ENCODE measurements at regions of chr4 and their contacts with region 1.

Region 1: DNA sequence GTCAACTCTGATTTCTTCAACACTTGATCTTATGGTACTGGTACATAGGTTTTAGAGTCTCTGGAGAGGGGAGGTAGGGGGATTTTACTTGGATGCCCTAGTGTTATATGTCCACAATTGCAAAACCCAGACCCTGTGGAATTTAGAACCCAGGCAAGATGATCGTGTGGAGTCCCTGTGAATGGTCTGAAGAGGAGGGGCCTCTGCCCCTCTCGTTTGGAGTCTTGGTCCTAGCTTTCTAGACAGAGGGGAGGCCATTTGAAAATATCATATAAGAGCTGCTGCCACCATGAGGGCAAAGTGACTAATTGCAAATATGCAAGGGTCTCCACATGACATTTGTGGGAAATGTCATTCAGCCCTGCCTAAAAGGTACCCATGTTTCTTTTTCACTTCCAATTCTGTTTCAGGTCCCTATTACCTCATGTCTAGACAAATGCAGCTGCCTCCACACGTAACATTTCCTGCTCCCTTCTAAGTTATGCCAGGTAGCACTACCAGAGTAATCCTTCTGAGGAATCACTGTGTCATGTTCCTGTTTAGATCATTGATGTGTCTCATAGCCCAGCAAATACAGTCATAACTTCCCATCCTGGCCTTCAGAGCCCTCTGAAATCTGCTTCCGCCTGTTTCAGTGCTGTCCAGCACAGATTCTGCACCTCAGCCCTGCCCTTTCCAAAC is 126.8 kb downstream of the KLHL8 start:
- DNase-seq: peak; percentile 43
- ATAC-seq: peak; percentile 93
- H3K4me3 ChIP-seq: no peak overlapping the region
- H3K27ac ChIP-seq: peak overlapping the region; percentile 13; the same call in 1 of the 2 replicates
- H3K4me1 ChIP-seq: peaks cover 16% of the 10 kb centered on the region
- H3K27me3 ChIP-seq: no peaks in the 10 kb centered on the region
- CTCF ChIP-seq: peak; percentile 62 to 78 (median 64)
- EP300 ChIP-seq: 0 out of 4 replicates have a peak, but pooled peaks of 1 of the 2 experiments have one; percentile 9
- POLR2A ChIP-seq: no peak
- RAD21 ChIP-seq: peak; percentile 85

Region 2: GRCh38 chr4:86908251-86908657 is 185.3 kb before region 1 on chr4:
- CTCF ChIA-PET with region 1: interaction called, 5 read pairs
- POLR2A ChIA-PET with region 1: no interaction called
- RAD21 ChIA-PET with region 1: interaction called, 5 read pairs
- SMC1A ChIA-PET with region 1: interaction called, 13 read pairs
- in situ Hi-C with region 1: no loop called
- intact Hi-C with region 1: no loop called
- DNase-seq: no peak
- ATAC-seq: peak; percentile 53
- H3K4me3 ChIP-seq: no peak overlapping the region
- H3K27ac ChIP-seq: peak overlapping the region; percentile 8; the same call in 1 of the 2 replicates
- H3K4me1 ChIP-seq: peaks cover 18% of the 10 kb centered on the region
- H3K27me3 ChIP-seq: no peaks in the 10 kb centered on the region
- CTCF ChIP-seq: no peak
- EP300 ChIP-seq: no peak
- POLR2A ChIP-seq: no peak
- RAD21 ChIP-seq: no peak

Region 3: DNA sequence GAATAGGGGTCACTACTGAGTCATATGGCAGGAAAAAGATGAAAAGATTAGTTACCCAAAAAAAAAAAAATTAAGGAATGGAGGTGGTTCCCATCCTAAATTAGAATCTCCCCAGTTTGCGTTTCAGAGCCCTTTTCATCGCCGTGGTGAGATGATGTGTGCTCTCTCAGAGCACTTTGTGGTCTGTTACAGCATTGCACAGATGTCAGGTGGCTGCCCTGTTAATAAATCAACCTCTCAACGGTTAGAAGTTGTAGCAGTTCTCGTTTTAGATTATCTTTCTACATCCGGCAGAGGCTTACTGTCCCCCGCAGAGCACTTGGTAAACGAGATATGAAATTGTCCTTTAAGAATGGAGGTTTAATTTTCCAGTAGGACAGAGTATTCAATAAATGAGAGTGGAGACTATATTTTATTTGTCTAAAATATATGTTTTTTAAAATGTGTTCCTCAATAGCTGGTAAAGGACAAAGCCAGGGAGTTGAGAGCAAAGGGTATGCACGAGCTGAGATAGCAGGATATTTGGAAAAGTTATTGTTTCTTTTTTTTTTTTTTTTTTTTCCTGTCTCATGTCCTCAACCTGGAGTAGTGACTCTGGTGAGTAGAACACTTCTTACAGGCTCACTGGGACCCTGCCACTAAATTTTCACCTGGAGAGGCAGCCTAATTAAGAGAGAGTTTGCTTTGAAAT is 131.8 kb before region 1 on chr4:
- CTCF ChIA-PET with region 1: interaction called, 6 read pairs
- POLR2A ChIA-PET with region 1: no interaction called
- RAD21 ChIA-PET with region 1: interaction called, 9 read pairs
- SMC1A ChIA-PET with region 1: interaction called, 14 read pairs
- in situ Hi-C with region 1: no loop called
- intact Hi-C with region 1: no loop called
- DNase-seq: peak; percentile 85
- ATAC-seq: peak; percentile 92
- H3K4me3 ChIP-seq: peak overlapping the region; percentile 61; the same call in 1 of the 2 replicates
- H3K27ac ChIP-seq: peak overlapping the region; percentile 80
- H3K4me1 ChIP-seq: peaks cover 70% of the 10 kb centered on the region
- H3K27me3 ChIP-seq: no peaks in the 10 kb centered on the region
- CTCF ChIP-seq: no peak
- EP300 ChIP-seq: peak; percentile 79 to 84; a peak in 3 of 4 replicates
- POLR2A ChIP-seq: peak; percentile 63
- RAD21 ChIP-seq: no peak

Region 4: DNA sequence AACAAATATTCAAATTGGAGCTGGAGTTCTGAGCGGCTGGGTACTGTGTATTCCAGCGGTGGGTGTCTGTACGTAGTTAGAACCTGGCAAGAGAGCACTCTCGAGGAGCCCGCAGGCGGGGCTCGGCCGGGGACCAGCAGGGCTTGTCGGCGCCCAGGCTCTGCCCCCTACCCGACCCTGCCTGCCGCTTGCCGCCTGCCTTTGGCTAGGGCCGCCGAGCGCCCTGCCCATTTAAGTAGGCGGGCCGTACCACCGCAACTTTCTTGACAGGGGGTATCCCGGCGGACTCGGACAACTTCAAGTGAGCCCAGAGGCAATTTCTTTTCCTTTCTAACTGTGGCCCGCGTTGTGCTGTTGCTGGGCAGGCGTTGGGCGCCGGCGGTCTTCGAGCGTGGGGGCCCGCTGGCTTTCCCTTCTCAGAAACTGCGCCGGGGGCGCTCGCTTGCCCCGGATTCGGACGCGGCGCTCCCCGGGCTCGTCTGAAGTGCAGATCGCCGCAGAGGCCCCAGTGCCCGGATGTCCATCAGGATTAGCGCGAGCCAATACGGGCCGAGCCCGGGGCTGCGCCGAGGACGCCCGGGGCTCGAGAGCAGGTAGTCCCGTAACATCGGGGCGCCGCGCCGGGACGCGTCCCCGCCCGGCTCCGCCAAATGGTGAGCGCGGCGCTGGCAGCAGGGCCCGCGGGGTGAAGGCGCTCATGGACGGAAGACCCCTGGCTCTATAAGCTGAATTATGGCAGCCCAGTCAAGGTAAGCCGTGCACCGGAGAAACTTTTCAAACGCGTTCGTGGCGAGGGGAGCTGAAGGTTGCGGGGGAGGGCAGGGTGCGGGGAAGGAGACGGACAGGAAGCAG is 86.7 kb before region 1 on chr4:
- CTCF ChIA-PET with region 1: interaction called, 70 read pairs
- POLR2A ChIA-PET with region 1: interaction called, 7 read pairs
- RAD21 ChIA-PET with region 1: interaction called, 68 read pairs
- SMC1A ChIA-PET with region 1: interaction called, 115 read pairs
- in situ Hi-C with region 1: no loop called
- intact Hi-C with region 1: loop called (anchors 2 kb)
- DNase-seq: peak; percentile 71
- ATAC-seq: peak; percentile 82
- H3K4me3 ChIP-seq: peak overlapping the region; percentile 78
- H3K27ac ChIP-seq: peak overlapping the region; percentile 93
- H3K4me1 ChIP-seq: peaks cover 17% of the 10 kb centered on the region
- H3K27me3 ChIP-seq: no peaks in the 10 kb centered on the region
- CTCF ChIP-seq: peak in 2 of 3 experiments; percentile 33 to 34; a peak in 3 of 6 replicates
- EP300 ChIP-seq: 0 out of 4 replicates have a peak, but pooled peaks of 1 of the 2 experiments have one; percentile 17
- POLR2A ChIP-seq: peak; percentile 97
- RAD21 ChIP-seq: no peak

Region 5: GRCh38 chr4:87044511-87045233 is 48.9 kb before region 1 on chr4:
- CTCF ChIA-PET with region 1: interaction called, 10 read pairs
- POLR2A ChIA-PET with region 1: interaction called, 6 read pairs
- RAD21 ChIA-PET with region 1: interaction called, 6 read pairs
- SMC1A ChIA-PET with region 1: interaction called, 10 read pairs
- in situ Hi-C with region 1: no loop called
- intact Hi-C with region 1: no loop called
- DNase-seq: no peak
- ATAC-seq: no peak
- H3K4me3 ChIP-seq: no peak overlapping the region
- H3K27ac ChIP-seq: no peak overlapping the region
- H3K4me1 ChIP-seq: peaks cover 26% of the 10 kb centered on the region
- H3K27me3 ChIP-seq: no peaks in the 10 kb centered on the region
- CTCF ChIP-seq: no peak
- EP300 ChIP-seq: no peak
- POLR2A ChIP-seq: no peak
- RAD21 ChIP-seq: no peak

Region 6: DNA sequence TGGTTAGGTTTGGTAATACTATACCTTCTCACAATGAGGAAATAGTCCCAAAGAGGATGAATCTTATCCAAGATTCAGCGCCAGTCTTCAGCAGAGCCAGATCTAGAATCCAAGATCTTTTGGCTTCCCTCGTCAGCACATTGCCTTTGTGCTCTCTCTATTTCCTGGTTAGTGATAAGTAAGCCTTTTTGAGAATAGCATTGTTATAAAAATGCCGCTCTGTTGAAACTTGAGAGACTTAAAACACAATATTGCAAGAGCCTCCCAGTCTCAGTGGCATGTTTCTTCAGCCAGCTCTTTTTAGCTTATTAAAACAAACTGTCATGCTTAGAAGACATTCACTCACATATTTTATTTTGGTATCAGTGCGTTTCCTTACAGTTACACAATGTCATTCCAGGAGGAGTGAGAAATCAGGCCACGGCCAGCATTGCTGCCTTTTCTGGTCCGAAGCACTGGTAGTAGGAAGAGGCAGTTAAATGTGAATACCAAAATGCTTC is 14.5 kb before region 1 on chr4:
- CTCF ChIA-PET with region 1: interaction called, 33 read pairs
- POLR2A ChIA-PET with region 1: interaction called, 7 read pairs
- RAD21 ChIA-PET with region 1: interaction called, 33 read pairs
- SMC1A ChIA-PET with region 1: interaction called, 39 read pairs
- in situ Hi-C with region 1: no loop called
- intact Hi-C with region 1: no loop called
- DNase-seq: no peak
- ATAC-seq: no peak
- H3K4me3 ChIP-seq: no peak overlapping the region
- H3K27ac ChIP-seq: no peak overlapping the region
- H3K4me1 ChIP-seq: peaks cover 9% of the 10 kb centered on the region; the same call in 1 of the 2 replicates
- H3K27me3 ChIP-seq: no peaks in the 10 kb centered on the region
- CTCF ChIP-seq: no peak
- EP300 ChIP-seq: no peak
- POLR2A ChIP-seq: no peak
- RAD21 ChIP-seq: no peak

Region 7: GRCh38 chr4:87150498-87151261 is 57.1 kb after region 1 on chr4:
- CTCF ChIA-PET with region 1: interaction called, 10 read pairs
- POLR2A ChIA-PET with region 1: no interaction called
- RAD21 ChIA-PET with region 1: interaction called, 5 read pairs
- SMC1A ChIA-PET with region 1: interaction called, 3 read pairs
- in situ Hi-C with region 1: no loop called
- intact Hi-C with region 1: no loop called
- DNase-seq: peak; percentile 35
- ATAC-seq: peak; percentile 84
- H3K4me3 ChIP-seq: no peak overlapping the region
- H3K27ac ChIP-seq: no peak overlapping the region
- H3K4me1 ChIP-seq: no peaks in the 10 kb centered on the region
- H3K27me3 ChIP-seq: no peaks in the 10 kb centered on the region
- CTCF ChIP-seq: peak; percentile 82 to 92 (median 84)
- EP300 ChIP-seq: no peak
- POLR2A ChIP-seq: no peak
- RAD21 ChIP-seq: peak; percentile 90

Region 8: DNA sequence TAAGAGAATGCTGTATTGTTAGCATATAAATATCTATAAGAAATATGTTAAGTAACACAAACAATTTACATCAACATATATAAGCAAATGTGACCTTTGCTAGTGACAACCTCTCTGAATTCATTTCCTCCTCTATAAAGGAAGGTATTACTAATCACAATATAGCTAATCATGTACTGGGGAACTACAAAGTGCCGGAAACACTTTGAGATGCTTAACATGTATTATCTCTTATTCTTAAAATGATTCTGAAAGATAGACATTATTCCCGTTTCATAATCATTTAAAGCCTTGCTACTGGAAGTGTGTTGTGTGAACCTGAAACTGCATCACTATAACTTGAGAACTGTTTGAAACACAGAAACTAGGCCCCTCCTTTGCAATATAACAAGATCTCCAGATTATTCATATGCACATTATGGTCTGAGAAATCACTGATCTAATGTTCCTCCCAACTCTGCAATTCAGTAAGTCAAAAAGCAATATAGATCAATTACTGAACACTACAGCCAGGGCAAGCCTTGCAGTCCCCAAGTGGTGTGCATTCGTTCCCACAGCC is 72.8 kb after region 1 on chr4:
- CTCF ChIA-PET with region 1: no interaction called
- POLR2A ChIA-PET with region 1: no interaction called
- RAD21 ChIA-PET with region 1: no interaction called
- SMC1A ChIA-PET with region 1: no interaction called
- in situ Hi-C with region 1: no loop called
- intact Hi-C with region 1: no loop called
- DNase-seq: no peak
- ATAC-seq: no peak
- H3K4me3 ChIP-seq: no peak overlapping the region
- H3K27ac ChIP-seq: no peak overlapping the region
- H3K4me1 ChIP-seq: no peaks in the 10 kb centered on the region
- H3K27me3 ChIP-seq: no peaks in the 10 kb centered on the region
- CTCF ChIP-seq: no peak
- EP300 ChIP-seq: no peak
- POLR2A ChIP-seq: no peak
- RAD21 ChIP-seq: no peak